Activated CD4-positive, alpha-beta T cell treated with anti-CD3 and anti-CD28 coated beads for 36 hours (primary cell): ENCODE measurements at regions of chr1 and their contacts with region 1.

Region 1: DNA sequence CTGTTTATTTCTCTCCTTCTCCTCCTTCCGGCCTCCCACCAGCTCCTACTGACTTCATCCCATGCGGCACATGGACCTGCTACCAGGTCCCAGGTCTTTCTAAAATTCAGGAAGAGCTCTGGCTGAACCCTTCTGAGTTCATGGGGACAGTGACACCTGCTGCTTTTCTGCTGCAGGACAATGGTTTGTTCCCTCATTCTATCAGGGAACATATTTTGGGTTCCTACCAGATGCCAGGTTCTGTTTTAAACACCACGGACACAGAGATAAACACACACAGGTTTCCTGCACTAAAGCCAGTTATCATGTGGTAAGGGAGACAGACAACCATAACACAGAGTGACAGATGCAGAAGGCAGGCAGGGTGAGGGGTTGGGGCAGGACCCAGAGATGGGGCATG is 114.0 kb upstream of the RAB4A start:
- DNase-seq: no peak
- ATAC-seq: no peak
- H3K4me3 Mint-ChIP-seq: no peak overlapping the region
- H3K27ac Mint-ChIP-seq: no peak overlapping the region
- H3K4me1 Mint-ChIP-seq: peaks cover 22% of the 10 kb centered on the region
- H3K27me3 Mint-ChIP-seq: no peaks in the 10 kb centered on the region

Region 2: GRCh38 chr1:229204921-229205777 is 48.3 kb after region 1 on chr1:
- CTCF ChIA-PET with region 1: no interaction called
- POLR2A ChIA-PET with region 1: no interaction called
- intact Hi-C with region 1: loop called in 1 of 2 experiments (anchors 5 kb)
- DNase-seq: peak; percentile 26
- ATAC-seq: peak; percentile 64
- H3K4me3 Mint-ChIP-seq: peak overlapping the region; percentile 16
- H3K27ac Mint-ChIP-seq: peak overlapping the region; percentile 44
- H3K4me1 Mint-ChIP-seq: peaks cover 32% of the 10 kb centered on the region
- H3K27me3 Mint-ChIP-seq: no peaks in the 10 kb centered on the region

Region 3: DNA sequence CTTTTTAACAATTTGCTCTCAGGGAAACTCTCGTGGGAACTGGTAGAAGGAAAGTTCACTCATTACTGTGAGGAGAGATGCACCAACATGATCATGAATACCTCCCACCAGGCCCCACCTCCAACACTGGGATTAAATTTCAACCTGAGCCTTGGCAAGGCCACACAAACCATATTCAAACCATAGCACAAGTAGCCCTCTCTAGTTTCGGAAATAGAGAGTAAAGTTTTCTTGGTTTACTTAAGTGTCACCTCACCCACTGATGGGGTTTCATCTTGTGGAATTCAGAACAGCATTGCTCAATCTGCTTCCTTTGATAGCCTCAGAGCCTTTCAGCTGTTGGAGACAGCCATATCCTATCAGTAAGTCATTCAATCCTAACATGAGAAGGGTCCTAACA is 211.5 kb after region 1 on chr1:
- CTCF ChIA-PET with region 1: no interaction called
- POLR2A ChIA-PET with region 1: no interaction called
- intact Hi-C with region 1: no loop called
- DNase-seq: no peak
- ATAC-seq: no peak
- H3K4me3 Mint-ChIP-seq: no peak overlapping the region
- H3K27ac Mint-ChIP-seq: no peak overlapping the region
- H3K4me1 Mint-ChIP-seq: no peaks in the 10 kb centered on the region
- H3K27me3 Mint-ChIP-seq: peaks cover 9% of the 10 kb centered on the region